ENCODE measurements at regions of chr20 and their contacts with region 1.

Region 1: GRCh38 chr20:56974499-56975236 is 291.8 kb downstream of the BMP7 start:
- DNase-seq: peak; percentile 82
- H3K4me3 Mint-ChIP-seq: no peak overlapping the region
- H3K27ac Mint-ChIP-seq: no peak overlapping the region
- H3K4me1 Mint-ChIP-seq: no peaks in the 10 kb centered on the region
- H3K27me3 Mint-ChIP-seq: peaks cover 31% of the 10 kb centered on the region
- CTCF ChIP-seq: peak; percentile 80

Region 2: DNA sequence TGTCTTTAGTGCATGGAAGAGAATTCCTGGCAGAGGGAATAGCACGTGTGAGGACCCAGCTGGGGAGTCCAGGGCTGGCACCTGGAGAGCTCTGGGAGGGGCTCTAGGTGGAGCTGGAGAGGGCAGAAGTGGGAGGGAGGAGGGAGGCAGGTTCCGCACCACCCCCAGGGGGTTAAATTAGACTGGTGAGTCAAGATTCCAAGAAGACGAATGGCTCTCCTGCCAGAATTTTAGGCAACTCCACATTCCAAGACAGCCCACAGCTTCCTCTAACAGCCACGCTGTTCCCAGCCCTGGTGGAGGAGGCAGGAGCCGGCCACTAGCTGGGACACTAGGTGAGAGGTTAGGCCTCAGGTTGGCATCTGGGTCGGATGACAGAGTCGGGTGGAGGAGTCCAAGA is 285.4 kb before region 1 on chr20:
- CTCF ChIA-PET with region 1: interaction called, 11 read pairs
- POLR2A ChIA-PET with region 1: no interaction called
- intact Hi-C with region 1: no loop called
- DNase-seq: peak; percentile 96
- H3K4me3 Mint-ChIP-seq: peak overlapping the region; percentile 33
- H3K27ac Mint-ChIP-seq: peak overlapping the region; percentile 72
- H3K4me1 Mint-ChIP-seq: peaks cover 19% of the 10 kb centered on the region
- H3K27me3 Mint-ChIP-seq: no peaks in the 10 kb centered on the region
- CTCF ChIP-seq: no peak

Region 3: GRCh38 chr20:56712141-56712540 is 262.5 kb before region 1 on chr20:
- CTCF ChIA-PET with region 1: interaction called, 3 read pairs
- POLR2A ChIA-PET with region 1: no interaction called
- intact Hi-C with region 1: loop called (anchors 10 kb)
- DNase-seq: peak; percentile 56
- H3K4me3 Mint-ChIP-seq: no peak overlapping the region
- H3K27ac Mint-ChIP-seq: no peak overlapping the region
- H3K4me1 Mint-ChIP-seq: peaks cover 19% of the 10 kb centered on the region
- H3K27me3 Mint-ChIP-seq: no peaks in the 10 kb centered on the region
- CTCF ChIP-seq: no peak

Region 4: GRCh38 chr20:56788040-56788983 is 186.4 kb before region 1 on chr20:
- CTCF ChIA-PET with region 1: no interaction called
- POLR2A ChIA-PET with region 1: interaction called, 5 read pairs
- intact Hi-C with region 1: loop called (anchors 5 kb)
- DNase-seq: peak; percentile 97
- H3K4me3 Mint-ChIP-seq: peak overlapping the region; percentile 67
- H3K27ac Mint-ChIP-seq: peak overlapping the region; percentile 98
- H3K4me1 Mint-ChIP-seq: peaks cover 32% of the 10 kb centered on the region
- H3K27me3 Mint-ChIP-seq: no peaks in the 10 kb centered on the region
- CTCF ChIP-seq: no peak

Region 5: DNA sequence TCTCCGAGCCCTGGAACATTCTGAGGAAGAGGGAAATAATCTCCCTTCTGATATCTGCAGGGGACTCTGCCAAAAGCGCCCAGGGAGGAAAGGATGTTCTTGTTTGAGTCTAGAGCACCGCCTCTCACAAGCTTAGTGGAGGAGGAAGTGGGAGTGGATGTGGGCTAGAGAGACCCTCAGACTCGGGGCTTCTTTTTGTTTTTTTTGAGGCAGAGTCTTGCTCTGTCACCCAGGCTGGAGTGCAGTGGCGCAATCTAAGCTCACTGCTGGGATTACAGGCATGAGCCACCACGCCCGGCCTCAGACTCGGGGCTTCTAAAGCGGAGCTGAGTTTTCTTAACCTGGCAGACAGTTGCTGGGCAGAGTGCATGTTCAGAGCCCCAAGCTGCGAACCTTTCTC is 19.0 kb before region 1 on chr20:
- CTCF ChIA-PET with region 1: interaction called, 13 read pairs
- POLR2A ChIA-PET with region 1: no interaction called
- intact Hi-C with region 1: no loop called
- DNase-seq: peak; percentile 17
- H3K4me3 Mint-ChIP-seq: no peak overlapping the region
- H3K27ac Mint-ChIP-seq: no peak overlapping the region
- H3K4me1 Mint-ChIP-seq: no peaks in the 10 kb centered on the region
- H3K27me3 Mint-ChIP-seq: peaks cover 13% of the 10 kb centered on the region
- CTCF ChIP-seq: no peak

Region 6: DNA sequence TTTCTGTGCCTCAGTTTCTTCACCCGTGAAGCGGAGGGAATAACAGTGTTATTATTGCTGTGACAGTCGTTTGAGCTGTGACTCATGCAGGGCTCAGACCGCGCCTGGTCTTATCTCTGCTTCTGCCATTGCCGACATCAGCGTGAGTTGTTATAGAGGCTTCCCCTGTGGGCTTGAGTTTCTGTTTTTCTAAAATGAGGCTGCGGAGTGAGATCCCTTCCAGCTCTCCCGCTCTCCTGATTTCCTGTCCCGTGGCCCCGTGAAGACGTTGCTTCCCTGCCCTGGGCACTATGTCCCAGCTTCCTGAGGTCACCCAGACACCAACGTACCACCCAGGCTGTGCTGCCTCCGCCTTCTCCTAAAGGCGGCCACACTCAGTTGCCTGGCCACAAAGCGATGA is 13.3 kb after region 1 on chr20:
- CTCF ChIA-PET with region 1: interaction called, 40 read pairs
- POLR2A ChIA-PET with region 1: interaction called, 6 read pairs
- intact Hi-C with region 1: no loop called
- DNase-seq: no peak
- H3K4me3 Mint-ChIP-seq: no peak overlapping the region
- H3K27ac Mint-ChIP-seq: no peak overlapping the region
- H3K4me1 Mint-ChIP-seq: peaks cover 8% of the 10 kb centered on the region
- H3K27me3 Mint-ChIP-seq: peaks cover 10% of the 10 kb centered on the region
- CTCF ChIP-seq: no peak

Region 7: GRCh38 chr20:57080788-57081187 is 106.1 kb after region 1 on chr20:
- CTCF ChIA-PET with region 1: interaction called, 4 read pairs
- POLR2A ChIA-PET with region 1: no interaction called
- intact Hi-C with region 1: loop called (anchors 2 kb)
- DNase-seq: peak; percentile 32
- H3K4me3 Mint-ChIP-seq: no peak overlapping the region
- H3K27ac Mint-ChIP-seq: no peak overlapping the region
- H3K4me1 Mint-ChIP-seq: peaks cover 15% of the 10 kb centered on the region
- H3K27me3 Mint-ChIP-seq: peaks cover 18% of the 10 kb centered on the region
- CTCF ChIP-seq: peak; percentile 27

Measured in MCF 10A (cell line).